H1 (cell line): ENCODE measurements at regions of chr6 and their contacts with region 1.

Region 1: GRCh38 chr6:44237813-44238433 is 9.0 kb upstream of the HSP90AB1 start:
- DNase-seq: peak in 1 of 2 experiments; percentile 89
- H3K4me3 ChIP-seq: peak overlapping the region; percentile 19 to 71 (median 48)
- H3K27ac ChIP-seq: peak overlapping the region; percentile 11; the same call in 1 of the 2 replicates
- H3K4me1 ChIP-seq: peaks cover 4 to 15% (median 9%) of the 10 kb centered on the region in 4 experiments; a peak in 6 of 7 replicates
- H3K27me3 ChIP-seq: no peaks in the 10 kb centered on the region; a peak in 1 of 7 replicates
- CTCF ChIP-seq: peak in 2 of 3 experiments; percentile 88 to 93; a peak in 3 of 4 replicates
- EP300 ChIP-seq: peak in 1 of 2 experiments; percentile 33; a peak in 1 of 3 replicates
- POLR2A ChIP-seq: peak in 1 of 2 experiments; percentile 68; a peak in 2 of 3 replicates
- RAD21 ChIP-seq: peak; percentile 47 to 59; a peak in 3 of 4 replicates

Region 2: GRCh38 chr6:43286980-43287716 is 950.8 kb before region 1 on chr6:
- CTCF ChIA-PET with region 1: no interaction called
- POLR2A ChIA-PET with region 1: no interaction called
- DNase-seq: no peak
- H3K4me3 ChIP-seq: no peak overlapping the region
- H3K27ac ChIP-seq: no peak overlapping the region
- H3K4me1 ChIP-seq: peaks cover 0 to 14% (median 9%) of the 10 kb centered on the region in 4 experiments; a peak in 5 of 7 replicates
- H3K27me3 ChIP-seq: peaks cover 0 to 28% (median 19%) of the 10 kb centered on the region in 4 experiments; a peak in 5 of 7 replicates
- CTCF ChIP-seq: peak in 2 of 3 experiments; percentile 63 to 67; a peak in 3 of 4 replicates
- EP300 ChIP-seq: no peak
- POLR2A ChIP-seq: no peak
- RAD21 ChIP-seq: peak; percentile 57 to 68

Region 3: DNA sequence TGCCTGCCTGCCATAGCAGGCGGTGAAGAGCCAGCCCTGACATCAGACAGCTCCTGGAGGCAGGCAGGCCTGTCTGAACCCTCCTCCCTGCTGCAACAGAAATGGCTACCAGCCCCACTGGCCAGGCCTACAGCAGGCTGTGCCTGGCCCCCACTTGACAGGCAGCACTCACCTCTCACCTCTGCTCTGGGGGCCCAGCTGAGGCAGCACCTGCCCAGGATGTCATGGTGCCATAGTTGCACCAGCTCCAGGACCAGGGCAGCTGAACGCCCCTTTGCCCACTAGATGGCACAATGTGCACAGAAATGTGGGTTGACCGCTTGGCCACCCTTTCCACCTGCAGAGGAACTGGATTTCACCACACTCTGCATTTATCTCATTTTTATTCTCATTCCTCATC is 141.3 kb before region 1 on chr6:
- CTCF ChIA-PET with region 1: interaction called, 23 read pairs
- POLR2A ChIA-PET with region 1: no interaction called
- DNase-seq: peak in 1 of 2 experiments; percentile 75
- H3K4me3 ChIP-seq: no peak overlapping the region
- H3K27ac ChIP-seq: no peak overlapping the region
- H3K4me1 ChIP-seq: no peaks in the 10 kb centered on the region
- H3K27me3 ChIP-seq: no peaks in the 10 kb centered on the region
- CTCF ChIP-seq: peak; percentile 87 to 97 (median 87)
- EP300 ChIP-seq: no peak
- POLR2A ChIP-seq: no peak
- RAD21 ChIP-seq: peak; percentile 89 to 90

Region 4: GRCh38 chr6:44161997-44162338 is 76.0 kb before region 1 on chr6:
- CTCF ChIA-PET with region 1: interaction called, 39 read pairs
- POLR2A ChIA-PET with region 1: interaction called, 6 read pairs
- DNase-seq: peak in 1 of 2 experiments; percentile 39
- H3K4me3 ChIP-seq: no peak overlapping the region
- H3K27ac ChIP-seq: no peak overlapping the region
- H3K4me1 ChIP-seq: peaks cover 0 to 18% (median 12%) of the 10 kb centered on the region in 4 experiments; a peak in 6 of 7 replicates
- H3K27me3 ChIP-seq: 0 out of 7 replicates have a peak, but pooled peaks cover 0 to 4% (median 0%) of the 10 kb centered on the region in 4 experiments
- CTCF ChIP-seq: no peak
- EP300 ChIP-seq: no peak
- POLR2A ChIP-seq: no peak
- RAD21 ChIP-seq: no peak

Region 5: GRCh38 chr6:44192428-44193041 is 45.4 kb before region 1 on chr6:
- CTCF ChIA-PET with region 1: interaction called, 34 read pairs
- POLR2A ChIA-PET with region 1: interaction called, 4 read pairs
- DNase-seq: no peak
- H3K4me3 ChIP-seq: no peak overlapping the region
- H3K27ac ChIP-seq: no peak overlapping the region
- H3K4me1 ChIP-seq: peaks cover 4 to 8% (median 4%) of the 10 kb centered on the region in 4 experiments; a peak in 6 of 7 replicates
- H3K27me3 ChIP-seq: no peaks in the 10 kb centered on the region; a peak in 1 of 7 replicates
- CTCF ChIP-seq: no peak
- EP300 ChIP-seq: no peak
- POLR2A ChIP-seq: no peak
- RAD21 ChIP-seq: no peak

Region 6: DNA sequence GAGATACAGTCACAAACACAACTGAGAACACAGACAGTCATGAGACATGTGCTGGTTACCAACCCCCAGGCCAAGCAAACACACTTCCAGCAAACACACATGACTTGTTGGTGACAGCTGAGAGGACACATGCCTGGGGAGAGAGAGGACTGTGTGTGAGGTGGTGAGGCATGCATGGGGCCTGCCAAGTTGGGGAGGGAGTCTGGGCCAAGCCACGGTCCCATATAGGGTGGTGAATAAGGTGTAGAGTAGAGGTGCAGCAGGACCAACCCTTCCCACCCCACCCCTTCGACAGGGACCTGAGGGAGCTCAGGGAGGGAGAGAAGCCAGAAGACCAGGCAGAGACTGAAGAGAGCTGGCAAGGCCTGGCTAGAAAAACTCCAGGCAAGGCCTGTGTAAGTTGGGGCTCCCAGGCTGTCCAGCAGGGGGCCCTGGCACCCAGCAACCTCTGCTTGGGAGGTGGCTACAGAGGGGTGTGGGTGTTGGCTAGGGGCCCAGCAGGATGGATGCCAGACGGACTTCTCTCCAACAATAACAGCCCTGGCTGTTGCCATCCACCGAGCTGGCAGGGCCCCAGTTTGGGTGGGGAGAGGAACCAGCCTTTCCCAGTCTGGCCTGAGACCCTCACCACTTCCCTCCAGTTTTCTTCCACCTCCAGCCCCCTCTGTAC is 16.5 kb before region 1 on chr6:
- CTCF ChIA-PET with region 1: interaction called, 129 read pairs
- POLR2A ChIA-PET with region 1: interaction called, 477 read pairs
- DNase-seq: peak in 1 of 2 experiments; percentile 74
- H3K4me3 ChIP-seq: no peak overlapping the region; a peak in 1 of 8 replicates
- H3K27ac ChIP-seq: no peak overlapping the region
- H3K4me1 ChIP-seq: peaks cover 33 to 61% (median 45%) of the 10 kb centered on the region in 4 experiments
- H3K27me3 ChIP-seq: no peaks in the 10 kb centered on the region
- CTCF ChIP-seq: peak in 2 of 3 experiments; percentile 67 to 71; a peak in 3 of 4 replicates
- EP300 ChIP-seq: no peak
- POLR2A ChIP-seq: no peak
- RAD21 ChIP-seq: peak; percentile 28 to 60

Region 7: DNA sequence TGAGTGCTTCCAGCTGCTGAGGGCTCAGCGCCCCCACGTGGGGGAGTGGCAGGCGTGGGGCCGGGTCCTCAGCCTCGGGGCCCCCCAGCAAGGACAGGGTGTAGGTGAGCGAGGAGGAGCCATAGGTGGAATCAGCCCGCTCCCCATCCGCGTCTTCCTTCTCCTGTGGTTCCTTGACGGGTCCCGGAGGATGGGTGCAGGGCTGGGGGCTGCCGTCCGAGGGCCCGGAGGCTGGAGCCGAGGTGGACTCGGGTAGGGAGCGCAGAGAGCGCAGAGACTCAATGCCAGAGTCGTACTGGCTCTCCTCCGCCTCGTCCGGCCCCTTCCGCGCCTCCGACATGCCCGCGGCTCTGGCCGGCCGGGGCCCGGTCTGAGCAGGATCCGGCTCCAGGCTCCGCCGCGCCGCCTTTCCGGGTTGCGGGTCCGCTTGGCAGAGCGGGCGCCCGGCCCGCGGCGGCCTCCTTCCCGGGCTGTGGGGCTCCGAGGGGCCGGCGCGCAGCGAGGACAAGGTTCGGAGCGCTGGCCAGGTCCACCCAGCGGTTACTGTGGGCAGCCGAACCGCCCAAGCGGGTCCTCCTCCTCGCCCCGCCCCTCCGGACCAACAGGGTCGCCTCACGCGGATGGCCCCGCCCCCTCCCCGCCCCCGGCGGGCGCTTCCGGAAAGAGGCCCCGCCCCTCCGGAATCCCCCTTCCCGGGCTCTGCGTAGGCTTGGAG is 27.2 kb after region 1 on chr6 and contains the start of gene NFKBIE:
- CTCF ChIA-PET with region 1: interaction called, 13 read pairs
- POLR2A ChIA-PET with region 1: interaction called, 581 read pairs
- DNase-seq: peak in 1 of 2 experiments; percentile 99
- H3K4me3 ChIP-seq: peak within 1 kb of the TSS; percentile 57 to 85 (median 76)
- H3K27ac ChIP-seq: no peak within 1 kb of the TSS
- H3K4me1 ChIP-seq: peaks cover 12 to 43% (median 21%) of the 10 kb centered on the region in 4 experiments
- H3K27me3 ChIP-seq: peaks cover 0 to 3% (median 0%) of the 10 kb centered on the region in 4 experiments; a peak in 2 of 7 replicates
- CTCF ChIP-seq: no peak; a peak in 1 of 4 replicates
- EP300 ChIP-seq: no peak
- POLR2A ChIP-seq: peak in 1 of 2 experiments; percentile 64; a peak in 2 of 3 replicates
- RAD21 ChIP-seq: peak in 1 of 2 experiments; percentile 34; a peak in 1 of 4 replicates
- total RNA-seq, gene NFKBIE: 10.8 and 13.5 TPM in 2 replicates

Region 8: GRCh38 chr6:44327760-44328159 is 89.8 kb after region 1 on chr6:
- CTCF ChIA-PET with region 1: no interaction called
- POLR2A ChIA-PET with region 1: no interaction called
- DNase-seq: no peak
- H3K4me3 ChIP-seq: 0 out of 8 replicates have a peak overlapping the region, but pooled peaks of 1 of the 4 experiments have one; percentile 17
- H3K27ac ChIP-seq: no peak overlapping the region
- H3K4me1 ChIP-seq: peaks cover 0 to 11% (median 6%) of the 10 kb centered on the region in 4 experiments; a peak in 4 of 7 replicates
- H3K27me3 ChIP-seq: no peaks in the 10 kb centered on the region; a peak in 1 of 7 replicates
- CTCF ChIP-seq: no peak
- EP300 ChIP-seq: no peak
- POLR2A ChIP-seq: no peak
- RAD21 ChIP-seq: no peak

Region 9: DNA sequence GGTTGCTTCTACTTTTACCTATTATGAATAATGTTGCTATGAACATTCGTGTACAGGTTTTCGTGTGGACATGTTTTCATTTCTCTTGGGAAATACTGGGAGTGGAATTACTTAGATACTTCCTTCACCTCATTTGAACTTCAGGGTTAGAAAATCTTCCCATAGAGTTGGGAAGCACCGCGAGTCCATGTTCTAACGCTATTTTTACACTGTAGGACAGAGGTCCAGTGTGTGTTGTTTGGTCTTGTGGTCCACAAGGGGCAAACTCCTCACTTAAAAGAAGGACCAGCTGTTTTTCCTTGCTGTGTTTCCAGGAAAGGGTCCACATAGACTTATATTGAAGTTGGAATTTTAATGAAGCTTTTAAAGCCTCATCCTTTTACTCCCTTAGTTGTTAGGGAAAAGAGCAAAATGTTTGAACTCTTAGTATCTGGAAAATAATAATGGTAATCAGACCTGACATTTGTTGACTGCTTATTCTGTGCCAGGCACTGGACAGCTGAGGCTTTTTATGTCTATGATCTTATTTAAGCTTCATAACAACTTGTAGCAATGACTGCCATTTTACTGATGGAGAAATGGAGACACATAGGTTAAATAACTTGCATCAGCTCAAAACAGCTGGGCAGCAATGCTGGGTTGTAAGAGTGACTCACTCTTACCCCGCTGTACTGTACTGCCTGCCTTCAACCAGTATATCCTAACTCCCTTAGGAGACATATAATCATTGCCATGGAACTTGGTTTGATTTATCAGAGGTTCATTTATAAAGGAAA is 201.5 kb after region 1 on chr6:
- CTCF ChIA-PET with region 1: no interaction called
- POLR2A ChIA-PET with region 1: no interaction called
- DNase-seq: no peak
- H3K4me3 ChIP-seq: no peak overlapping the region
- H3K27ac ChIP-seq: no peak overlapping the region
- H3K4me1 ChIP-seq: no peaks in the 10 kb centered on the region
- H3K27me3 ChIP-seq: no peaks in the 10 kb centered on the region
- CTCF ChIP-seq: no peak
- EP300 ChIP-seq: no peak
- POLR2A ChIP-seq: no peak
- RAD21 ChIP-seq: no peak

Region 10: DNA sequence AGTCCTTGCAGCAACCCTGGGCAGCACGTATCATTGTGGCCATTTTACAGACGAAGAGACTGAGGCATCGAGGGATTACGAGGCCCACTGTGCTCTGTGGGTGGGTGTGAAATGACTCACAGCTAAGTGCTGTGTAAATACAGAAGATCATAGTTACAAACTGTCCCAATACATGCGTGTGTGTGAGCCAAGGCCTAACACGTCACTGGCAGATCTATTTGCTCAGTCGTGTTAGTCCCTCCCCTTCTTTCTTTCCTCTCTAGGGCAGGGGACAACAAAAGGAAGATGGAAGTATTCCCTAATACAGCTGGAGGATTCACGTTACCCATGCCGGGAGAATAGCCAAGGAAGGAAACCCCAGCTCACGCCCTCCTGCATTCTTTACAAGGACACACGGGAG is 325.5 kb after region 1 on chr6:
- CTCF ChIA-PET with region 1: no interaction called
- POLR2A ChIA-PET with region 1: no interaction called
- DNase-seq: no peak
- H3K4me3 ChIP-seq: no peak overlapping the region
- H3K27ac ChIP-seq: no peak overlapping the region
- H3K4me1 ChIP-seq: peaks cover 0 to 8% (median 1%) of the 10 kb centered on the region in 4 experiments; a peak in 3 of 7 replicates
- H3K27me3 ChIP-seq: no peaks in the 10 kb centered on the region
- CTCF ChIP-seq: no peak
- EP300 ChIP-seq: no peak
- POLR2A ChIP-seq: no peak
- RAD21 ChIP-seq: no peak